ENCODE measurements at regions of chr11 and their contacts with region 1.

Region 1: DNA sequence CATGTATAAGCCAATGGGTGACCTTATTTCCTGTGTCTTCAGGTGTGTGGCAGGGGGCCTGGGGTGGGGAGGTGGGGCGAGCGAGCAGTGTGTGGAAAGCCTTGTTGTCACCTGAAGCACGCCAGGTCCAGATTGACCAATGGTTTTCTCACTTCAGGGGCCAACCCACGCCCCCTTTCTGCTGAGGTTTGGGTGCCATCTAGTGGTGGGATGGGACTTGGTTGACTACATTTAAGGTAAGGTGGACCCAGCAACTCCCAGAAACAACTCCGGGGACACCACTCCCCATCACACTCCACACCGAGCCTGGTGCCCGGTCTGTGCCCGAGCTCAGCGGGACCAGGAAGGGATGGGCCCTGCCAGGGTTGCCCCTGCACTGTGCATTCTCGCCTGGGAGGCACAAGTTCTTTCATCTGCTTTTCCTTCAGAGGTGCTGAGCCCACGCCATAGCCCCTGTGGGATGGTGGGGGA is 40.0 kb downstream of the TPCN2 start:
- DNase-seq: peak; percentile 94
- H3K4me3 ChIP-seq: no peak overlapping the region
- H3K27ac ChIP-seq: peak overlapping the region; percentile 87 to 92 (median 88)
- H3K4me1 ChIP-seq: peaks cover 27 to 54% (median 48%) of the 10 kb centered on the region in 4 donors
- H3K27me3 ChIP-seq: no peaks in the 10 kb centered on the region
- CTCF ChIP-seq: peak; percentile 71 to 77 (median 75)
- EP300 ChIP-seq: no peak
- POLR2A ChIP-seq: no peak

Region 2: GRCh38 chr11:68903288-68904247 is 185.1 kb before region 1 on chr11 and contains the starts of genes IGHMBP2 and MRPL21:
- intact Hi-C with region 1: loop called (anchors 2 kb)
- DNase-seq: no peak
- H3K4me3 ChIP-seq: peak within 1 kb of the TSS; percentile 75 to 85 (median 78)
- H3K27ac ChIP-seq: peak within 1 kb of the TSS; percentile 85 to 90 (median 90)
- H3K4me1 ChIP-seq: peaks cover 26 to 39% (median 33%) of the 10 kb centered on the region in 4 donors
- H3K27me3 ChIP-seq: no peaks in the 10 kb centered on the region
- CTCF ChIP-seq: peak in 1 of 3 experiments; percentile 18
- EP300 ChIP-seq: no peak
- POLR2A ChIP-seq: peak; percentile 45
- total RNA-seq, gene IGHMBP2: 11.6 to 30.8 (median 28.0) TPM
- total RNA-seq, gene MRPL21: 47.2 to 66.2 (median 51.2) TPM